Activated CD4-positive, alpha-beta memory T cell treated with anti-CD3 and anti-CD28 coated beads for 36 hours (primary cell): ENCODE measurements at regions of chr7 and their contacts with region 1.

Region 1: DNA sequence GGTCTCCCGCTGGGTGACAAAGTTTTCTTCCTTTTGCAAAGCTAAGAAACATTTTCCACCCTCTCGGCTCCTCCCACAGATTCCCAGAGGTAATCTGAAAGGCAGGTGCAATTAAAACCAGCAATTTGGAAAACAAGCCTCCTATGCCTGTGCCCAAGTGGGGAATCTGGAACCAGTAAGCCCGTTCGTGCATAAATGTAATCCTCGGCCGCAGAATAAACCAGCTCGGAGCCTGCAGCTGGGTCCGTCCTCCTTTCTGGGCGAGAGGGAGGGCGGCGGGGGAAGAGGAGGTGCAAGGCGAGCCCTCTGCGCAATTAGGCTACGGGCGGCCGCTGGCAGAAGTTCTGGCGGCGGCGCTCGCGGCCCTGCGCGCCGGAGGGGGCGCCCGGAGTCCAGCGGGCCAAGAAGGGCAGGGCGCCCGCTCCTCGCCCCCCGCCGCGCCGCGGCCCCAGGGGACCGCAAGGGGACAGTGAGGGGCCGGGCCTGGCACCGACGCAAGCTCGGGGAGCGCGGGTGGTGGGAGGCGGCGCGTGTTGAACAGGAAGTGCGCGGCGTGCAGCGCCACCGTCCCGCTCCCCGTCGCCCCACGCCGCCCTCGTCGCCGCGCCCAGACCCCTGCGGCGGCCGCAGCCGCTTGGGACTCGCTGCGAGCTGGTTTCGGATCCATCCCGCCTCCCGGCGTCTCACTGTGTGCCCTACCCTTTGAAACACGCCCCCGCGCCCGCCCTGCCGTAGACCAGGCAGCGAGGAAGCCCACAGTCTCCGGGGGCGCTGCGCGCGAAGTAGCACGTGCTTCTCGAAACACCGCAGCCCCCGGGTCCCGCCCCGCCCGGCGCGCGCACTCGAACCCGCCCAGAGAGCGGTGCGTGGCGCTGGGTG is at the start of gene PRKAG2:
- DNase-seq: peak; percentile 74
- H3K4me3 Mint-ChIP-seq: peak within 1 kb of the TSS; percentile 96
- H3K27ac Mint-ChIP-seq: peak within 1 kb of the TSS; percentile 87
- H3K4me1 Mint-ChIP-seq: peaks cover 14% of the 10 kb centered on the region
- H3K27me3 Mint-ChIP-seq: no peaks in the 10 kb centered on the region
- total RNA-seq, gene PRKAG2: 23.5 to 25.6 TPM

Region 2: DNA sequence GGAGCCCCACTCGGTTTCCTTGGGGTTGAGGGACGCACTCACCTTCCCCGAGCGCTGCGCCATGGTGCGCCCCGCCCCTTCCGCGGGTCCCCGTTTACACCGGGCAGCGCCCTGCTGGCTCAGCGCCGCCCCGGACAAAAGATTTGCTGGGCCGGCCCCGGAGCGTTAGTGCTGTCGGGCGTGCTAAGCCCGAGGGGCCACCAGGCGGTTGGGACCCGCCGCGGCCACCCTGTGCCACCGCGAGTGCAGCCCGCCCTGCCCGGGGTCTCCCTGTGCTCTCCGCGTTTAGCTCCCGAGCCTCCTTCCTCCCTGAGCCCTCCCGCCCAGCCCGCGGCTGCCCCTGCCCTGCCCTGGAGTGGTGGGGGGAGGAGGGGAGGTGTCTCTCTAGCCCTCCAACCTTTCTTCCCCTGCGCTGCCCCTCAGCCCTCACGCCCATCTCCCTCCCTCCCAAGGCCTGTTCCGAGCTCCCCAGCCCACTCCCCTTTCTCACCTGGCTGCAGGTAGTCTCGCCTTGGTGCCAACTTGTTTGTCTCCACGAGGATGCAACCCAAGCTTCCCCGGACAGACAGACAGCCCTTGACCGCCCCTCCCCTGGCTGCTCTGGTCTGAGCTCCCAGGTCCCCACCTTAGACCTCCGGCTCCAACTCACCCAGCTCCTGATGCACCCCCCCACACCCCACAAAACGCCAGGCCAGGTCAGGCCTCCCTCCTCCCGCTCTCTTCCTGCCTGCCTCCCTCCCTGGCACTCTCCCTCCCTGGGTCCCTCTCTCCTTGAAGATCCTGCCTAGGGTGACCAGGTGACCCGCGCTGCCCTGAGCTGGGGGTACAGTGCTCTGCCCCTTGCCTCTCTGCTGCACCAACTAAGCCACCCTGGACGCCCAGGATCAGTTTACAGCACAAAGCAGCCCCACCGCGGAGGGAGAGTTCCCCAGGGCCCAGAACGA is 437.0 kb before region 1 on chr7 and contains the start of gene CRYGN:
- CTCF ChIA-PET with region 1: no interaction called
- POLR2A ChIA-PET with region 1: no interaction called
- intact Hi-C with region 1: loop called (anchors 5 kb)
- DNase-seq: no peak
- H3K4me3 Mint-ChIP-seq: peak within 1 kb of the TSS; percentile 41
- H3K27ac Mint-ChIP-seq: no peak within 1 kb of the TSS
- H3K4me1 Mint-ChIP-seq: peaks cover 28% of the 10 kb centered on the region
- H3K27me3 Mint-ChIP-seq: no peaks in the 10 kb centered on the region
- total RNA-seq, gene CRYGN: 0.21 TPM in 1 of 2 experiments, not detected in the other

Region 3: DNA sequence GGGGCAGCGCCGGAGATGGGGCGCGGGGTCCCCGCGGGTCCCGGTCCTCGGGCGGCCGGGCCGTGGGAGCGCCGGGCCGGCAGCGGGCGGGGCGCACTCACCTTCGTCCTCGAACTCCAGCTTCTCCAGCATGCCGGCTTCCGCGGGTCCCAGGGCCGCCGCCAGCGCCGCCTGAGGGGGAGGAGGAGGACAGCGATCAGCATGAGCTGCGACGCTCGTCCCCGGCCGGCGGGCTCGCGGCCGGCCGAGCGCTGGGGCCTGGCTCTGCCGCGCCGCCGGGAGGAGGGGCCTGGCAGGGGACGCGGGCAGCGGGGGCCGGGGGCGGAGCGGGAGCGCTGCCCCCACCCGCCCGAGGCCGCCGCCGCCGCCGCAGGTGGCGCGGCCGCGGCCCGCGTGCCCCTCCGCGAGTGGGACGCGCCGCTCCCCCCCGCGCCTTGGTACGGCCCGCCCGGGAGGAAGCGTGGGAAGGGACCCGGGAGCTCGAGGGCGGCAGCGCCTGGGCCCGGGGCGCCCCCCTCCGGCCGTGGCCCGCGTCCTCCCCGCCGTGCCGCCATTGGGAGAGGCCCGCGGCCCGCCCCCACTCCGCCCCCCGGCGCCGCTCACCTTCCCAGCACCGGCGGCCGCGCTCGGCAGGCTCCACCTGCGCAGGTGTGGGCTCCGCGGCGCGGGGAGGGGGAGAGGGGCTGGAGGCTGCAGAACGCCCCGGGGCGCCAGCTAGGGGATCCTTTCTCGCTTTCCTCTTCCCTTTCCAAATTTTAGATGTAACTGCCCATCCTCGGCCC is 245.0 kb before region 1 on chr7:
- CTCF ChIA-PET with region 1: no interaction called
- POLR2A ChIA-PET with region 1: interaction called, 4 read pairs
- intact Hi-C with region 1: loop called (anchors 1 kb)
- DNase-seq: peak; percentile 90
- H3K4me3 Mint-ChIP-seq: peak overlapping the region; percentile 95
- H3K27ac Mint-ChIP-seq: peak overlapping the region; percentile 99
- H3K4me1 Mint-ChIP-seq: peaks cover 21% of the 10 kb centered on the region
- H3K27me3 Mint-ChIP-seq: no peaks in the 10 kb centered on the region

Region 4: GRCh38 chr7:151795168-151795811 is 81.8 kb before region 1 on chr7:
- CTCF ChIA-PET with region 1: interaction called, 3 read pairs
- POLR2A ChIA-PET with region 1: interaction called, 7 read pairs
- intact Hi-C with region 1: loop called (anchors 1 kb)
- DNase-seq: peak; percentile 95
- H3K4me3 Mint-ChIP-seq: peak overlapping the region; percentile 51
- H3K27ac Mint-ChIP-seq: peak overlapping the region; percentile 81
- H3K4me1 Mint-ChIP-seq: peaks cover 32% of the 10 kb centered on the region
- H3K27me3 Mint-ChIP-seq: no peaks in the 10 kb centered on the region

Region 5: DNA sequence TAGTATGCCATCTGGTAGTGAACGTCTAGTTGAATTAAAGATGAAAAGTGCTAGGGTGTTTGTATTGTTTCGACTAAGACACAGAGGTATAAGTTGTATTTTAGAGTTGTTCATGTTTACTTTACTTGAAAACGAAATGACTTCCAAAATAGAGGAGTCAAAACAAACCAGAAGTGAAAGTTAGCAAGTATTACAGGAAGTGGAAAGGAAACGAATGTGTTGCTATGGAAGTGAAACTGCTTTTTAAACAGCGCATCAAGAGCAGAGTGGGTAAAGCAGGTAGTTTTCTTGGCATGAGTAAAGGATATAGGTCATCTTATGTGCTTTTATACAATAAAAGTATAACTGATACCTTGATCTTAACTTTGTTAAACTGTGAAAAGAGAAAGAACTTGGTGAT is 59.1 kb after region 1 on chr7:
- CTCF ChIA-PET with region 1: no interaction called
- POLR2A ChIA-PET with region 1: no interaction called
- intact Hi-C with region 1: loop called (anchors 1 kb)
- DNase-seq: no peak
- H3K4me3 Mint-ChIP-seq: peak overlapping the region; percentile 31
- H3K27ac Mint-ChIP-seq: peak overlapping the region; percentile 52
- H3K4me1 Mint-ChIP-seq: peaks cover 17% of the 10 kb centered on the region
- H3K27me3 Mint-ChIP-seq: peaks cover 2% of the 10 kb centered on the region

Region 6: DNA sequence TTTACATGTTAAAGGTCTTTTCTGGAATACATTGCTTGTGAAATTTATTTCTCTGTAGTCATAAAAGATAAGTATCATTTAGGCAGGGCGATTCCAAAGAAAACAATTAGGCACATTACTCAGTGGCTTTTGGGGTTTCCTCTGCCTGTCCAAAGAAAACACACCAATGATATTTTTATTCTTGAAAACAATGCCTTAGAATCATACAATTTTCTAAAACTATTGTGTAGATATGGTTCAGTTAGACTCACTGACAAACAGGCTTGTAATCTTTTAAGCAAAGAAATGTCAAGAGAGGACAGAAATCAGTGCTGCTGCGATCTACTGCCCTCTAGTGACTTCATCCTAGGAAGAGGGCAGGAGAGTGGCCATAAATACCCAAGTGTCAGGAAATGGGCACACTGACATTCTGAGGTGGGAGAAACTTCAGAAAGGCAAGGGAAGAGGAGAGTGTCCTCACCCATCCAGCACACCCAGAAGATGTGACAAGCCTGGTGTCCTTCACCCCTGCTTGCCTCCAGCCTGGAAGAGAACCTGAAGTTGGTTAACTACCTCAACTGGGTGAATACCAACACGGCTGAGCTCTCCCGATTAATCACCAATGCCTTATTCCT is 268.8 kb after region 1 on chr7:
- CTCF ChIA-PET with region 1: no interaction called
- POLR2A ChIA-PET with region 1: no interaction called
- intact Hi-C with region 1: loop called (anchors 5 kb)
- DNase-seq: peak; percentile 45
- H3K4me3 Mint-ChIP-seq: no peak overlapping the region
- H3K27ac Mint-ChIP-seq: peak overlapping the region; percentile 90
- H3K4me1 Mint-ChIP-seq: peaks cover 41% of the 10 kb centered on the region
- H3K27me3 Mint-ChIP-seq: no peaks in the 10 kb centered on the region